ENCODE measurements at regions of chr5 and their contacts with region 1.

Region 1: GRCh38 chr5:26492906-26493459 is 545.4 kb downstream of the CDH9 start:
- DNase-seq: no peak
- ATAC-seq: no peak

Region 2: DNA sequence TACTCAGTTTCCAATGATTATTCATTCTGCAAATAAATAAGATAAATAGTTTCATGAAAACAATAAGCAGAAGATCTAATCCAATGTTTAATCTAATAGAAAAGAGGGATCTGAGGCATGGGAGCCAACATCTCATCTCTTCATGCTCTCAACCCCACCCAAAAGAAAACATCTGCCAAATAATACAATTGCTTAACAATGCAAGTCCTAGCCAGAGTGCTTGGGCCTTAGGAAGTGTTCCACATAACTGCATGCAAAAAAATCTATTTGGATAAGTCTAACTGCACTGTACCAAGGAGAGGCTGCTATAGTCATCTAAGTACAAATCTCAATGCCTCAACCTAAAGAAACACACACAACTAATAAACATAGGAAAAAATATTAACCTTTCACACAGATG is 60.6 kb before region 1 on chr5:
- intact Hi-C with region 1: loop called (anchors 2 kb)
- DNase-seq: no peak
- ATAC-seq: peak; percentile 84

Measured in sciatic nerve (tissue), 2 donors.